ENCODE measurements at regions of chr12 and their contacts with region 1.

Region 1: GRCh38 chr12:11773889-11774677 is 124.6 kb downstream of the ETV6 start:
- DNase-seq: no peak
- ATAC-seq: no peak
- H3K4me3 ChIP-seq: no peak overlapping the region
- H3K27ac ChIP-seq: no peak overlapping the region
- H3K4me1 ChIP-seq: peaks cover 9% of the 10 kb centered on the region; the same call in 1 of the 2 replicates
- H3K27me3 ChIP-seq: no peaks in the 10 kb centered on the region
- CTCF ChIP-seq: no peak
- POLR2A ChIP-seq: no peak
- RAD21 ChIP-seq: no peak

Region 2: DNA sequence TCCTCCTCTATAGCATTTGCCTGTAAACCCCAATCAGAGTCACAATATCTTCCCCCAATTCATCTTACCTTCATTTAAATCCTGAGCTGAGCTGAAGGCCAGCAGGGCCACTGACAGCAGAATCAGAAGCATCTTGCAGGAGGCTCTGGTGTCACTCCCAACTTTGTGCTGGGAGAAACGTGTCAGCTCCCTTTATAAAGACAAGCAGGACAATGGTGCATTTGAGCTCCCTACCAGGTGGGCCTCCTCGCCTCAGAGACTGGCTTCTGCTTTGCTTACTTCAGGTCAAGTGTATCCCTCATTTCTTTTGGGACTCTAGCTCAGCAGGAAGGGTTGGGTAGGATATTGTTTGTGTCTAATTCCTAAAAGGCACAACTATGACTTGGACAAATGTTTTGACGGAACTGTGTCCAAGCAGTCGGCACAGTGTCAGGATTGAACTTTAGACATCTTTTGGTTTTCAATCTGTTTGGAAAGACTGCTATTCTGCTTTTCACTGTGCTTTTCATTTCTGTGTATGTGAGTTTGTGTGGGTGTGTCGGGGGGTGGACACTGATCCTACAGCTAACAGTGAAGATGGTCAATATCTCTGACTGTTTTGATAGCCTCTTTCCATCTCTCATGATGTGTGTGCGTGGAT is 889.9 kb before region 1 on chr12 and contains the start of gene PRH1:
- CTCF ChIA-PET with region 1: no interaction called
- POLR2A ChIA-PET with region 1: no interaction called
- dilution Hi-C with region 1: no loop called
- in situ Hi-C with region 1: no loop called
- intact Hi-C with region 1: no loop called
- DNase-seq: no peak
- ATAC-seq: no peak
- H3K4me3 ChIP-seq: no peak within 1 kb of the TSS
- H3K27ac ChIP-seq: no peak within 1 kb of the TSS
- H3K4me1 ChIP-seq: no peaks in the 10 kb centered on the region
- H3K27me3 ChIP-seq: no peaks in the 10 kb centered on the region
- CTCF ChIP-seq: no peak
- POLR2A ChIP-seq: no peak
- RAD21 ChIP-seq: no peak
- total RNA-seq, gene PRH1: 16.7 and 18.8 TPM in 2 replicates

Region 3: GRCh38 chr12:11787933-11788849 is 14.1 kb after region 1 on chr12:
- CTCF ChIA-PET with region 1: no interaction called
- POLR2A ChIA-PET with region 1: no interaction called
- dilution Hi-C with region 1: no loop called
- in situ Hi-C with region 1: no loop called
- intact Hi-C with region 1: loop called (anchors 2 kb)
- DNase-seq: no peak
- ATAC-seq: no peak
- H3K4me3 ChIP-seq: no peak overlapping the region
- H3K27ac ChIP-seq: no peak overlapping the region
- H3K4me1 ChIP-seq: peaks cover 2% of the 10 kb centered on the region
- H3K27me3 ChIP-seq: no peaks in the 10 kb centered on the region
- CTCF ChIP-seq: no peak
- POLR2A ChIP-seq: no peak
- RAD21 ChIP-seq: no peak

Region 4: GRCh38 chr12:11855983-11856374 is 81.9 kb after region 1 on chr12:
- CTCF ChIA-PET with region 1: no interaction called
- POLR2A ChIA-PET with region 1: no interaction called
- dilution Hi-C with region 1: no loop called
- in situ Hi-C with region 1: no loop called
- intact Hi-C with region 1: no loop called
- DNase-seq: no peak
- ATAC-seq: no peak
- H3K4me3 ChIP-seq: no peak overlapping the region
- H3K27ac ChIP-seq: no peak overlapping the region
- H3K4me1 ChIP-seq: peaks cover 2% of the 10 kb centered on the region; the same call in 1 of the 2 replicates
- H3K27me3 ChIP-seq: no peaks in the 10 kb centered on the region
- CTCF ChIP-seq: no peak
- POLR2A ChIP-seq: no peak
- RAD21 ChIP-seq: no peak

Measured in IMR-90 (cell line).